HEK293 (cell line): ENCODE measurements at regions of chr12 and their contacts with region 1.

Region 1: GRCh38 chr12:107670999-107671643 is 14.5 kb upstream of the PWP1 start:
- H3K4me3 ChIP-seq: no peak overlapping the region
- H3K27ac ChIP-seq: no peak overlapping the region
- H3K4me1 ChIP-seq: no peaks in the 10 kb centered on the region
- CTCF ChIP-seq: peak; percentile 66

Region 2: GRCh38 chr12:107522692-107523477 is 148.2 kb before region 1 on chr12:
- CTCF ChIA-PET with region 1: no interaction called
- POLR2A ChIA-PET with region 1: no interaction called
- H3K4me3 ChIP-seq: no peak overlapping the region
- H3K27ac ChIP-seq: no peak overlapping the region
- H3K4me1 ChIP-seq: peaks cover 3% of the 10 kb centered on the region; the same call in 1 of the 2 replicates
- CTCF ChIP-seq: no peak

Region 3: GRCh38 chr12:107655281-107656065 is 15.6 kb before region 1 on chr12:
- CTCF ChIA-PET with region 1: interaction called, 10 read pairs
- POLR2A ChIA-PET with region 1: no interaction called
- H3K4me3 ChIP-seq: no peak overlapping the region
- H3K27ac ChIP-seq: no peak overlapping the region
- H3K4me1 ChIP-seq: no peaks in the 10 kb centered on the region
- CTCF ChIP-seq: no peak

Region 4: GRCh38 chr12:107685360-107686248 is 14.5 kb after region 1 on chr12 and contains the start of gene PWP1:
- CTCF ChIA-PET with region 1: interaction called, 15 read pairs
- POLR2A ChIA-PET with region 1: no interaction called
- H3K4me3 ChIP-seq: peak within 1 kb of the TSS; percentile 76
- H3K27ac ChIP-seq: peak within 1 kb of the TSS; percentile 55
- H3K4me1 ChIP-seq: peaks cover 4% of the 10 kb centered on the region; the same call in 1 of the 2 replicates
- CTCF ChIP-seq: no peak; the same call in 1 of the 2 replicates

Region 5: DNA sequence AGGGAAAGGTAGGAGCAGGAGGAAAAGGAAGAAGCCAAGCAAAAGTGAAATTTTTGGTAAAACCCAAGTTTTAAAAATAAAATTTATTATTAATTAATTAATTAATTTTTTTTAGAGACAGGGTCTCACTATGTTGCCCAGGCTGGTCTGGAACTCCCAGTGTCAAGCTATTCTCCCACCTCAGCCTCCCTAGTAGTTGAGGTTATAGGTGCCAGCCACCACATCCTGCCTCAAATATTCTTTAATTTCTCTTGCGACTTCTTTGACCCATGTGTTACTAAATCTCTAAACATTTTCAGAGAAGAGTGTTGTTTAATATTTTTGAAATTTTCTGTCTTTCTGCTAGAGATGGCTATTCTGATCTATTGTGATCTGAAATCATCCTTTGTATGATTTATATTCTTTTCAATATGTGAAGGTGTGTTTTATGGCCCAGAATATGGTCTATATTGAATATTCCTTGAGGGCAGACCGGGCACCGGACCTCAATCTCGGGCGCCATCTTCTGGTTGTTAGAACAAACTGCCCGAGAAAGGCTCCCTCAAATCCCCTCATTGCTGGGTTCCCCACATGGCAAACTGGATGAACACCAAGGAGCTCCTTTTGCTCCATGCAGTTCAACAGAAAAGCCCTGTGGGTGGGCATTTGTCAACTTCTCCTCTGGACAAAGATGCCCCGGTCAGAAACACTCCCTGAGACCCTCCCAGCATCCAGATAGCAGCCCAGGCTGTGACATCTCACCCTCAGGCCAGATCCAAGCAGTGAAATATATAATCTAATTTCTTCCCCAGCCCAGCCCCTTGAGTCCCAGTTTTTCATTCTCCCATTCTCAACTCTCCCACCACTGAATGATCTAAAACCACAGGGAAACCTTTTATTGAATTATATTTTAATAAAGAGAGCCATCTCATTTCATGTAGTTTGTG is 213.9 kb after region 1 on chr12:
- CTCF ChIA-PET with region 1: interaction called, 114 read pairs
- POLR2A ChIA-PET with region 1: no interaction called
- H3K4me3 ChIP-seq: no peak overlapping the region
- H3K27ac ChIP-seq: no peak overlapping the region
- H3K4me1 ChIP-seq: no peaks in the 10 kb centered on the region
- CTCF ChIP-seq: peak; percentile 39; the same call in 1 of the 2 replicates

Region 6: GRCh38 chr12:108119126-108119976 is 448.2 kb after region 1 on chr12:
- CTCF ChIA-PET with region 1: no interaction called
- POLR2A ChIA-PET with region 1: no interaction called
- H3K4me3 ChIP-seq: no peak overlapping the region
- H3K27ac ChIP-seq: no peak overlapping the region
- H3K4me1 ChIP-seq: no peaks in the 10 kb centered on the region
- CTCF ChIP-seq: no peak